Activated CD4-positive, alpha-beta memory T cell treated with anti-CD3 and anti-CD28 coated beads for 36 hours (primary cell): ENCODE measurements at regions of chr14 and their contacts with region 1.

Region 1: GRCh38 chr14:61730756-61731373 is 31.4 kb upstream of the SNAPC1 start:
- DNase-seq: no peak
- H3K4me3 Mint-ChIP-seq: no peak overlapping the region
- H3K27ac Mint-ChIP-seq: peak overlapping the region; percentile 28
- H3K4me1 Mint-ChIP-seq: peaks cover 51% of the 10 kb centered on the region
- H3K27me3 Mint-ChIP-seq: no peaks in the 10 kb centered on the region

Region 2: DNA sequence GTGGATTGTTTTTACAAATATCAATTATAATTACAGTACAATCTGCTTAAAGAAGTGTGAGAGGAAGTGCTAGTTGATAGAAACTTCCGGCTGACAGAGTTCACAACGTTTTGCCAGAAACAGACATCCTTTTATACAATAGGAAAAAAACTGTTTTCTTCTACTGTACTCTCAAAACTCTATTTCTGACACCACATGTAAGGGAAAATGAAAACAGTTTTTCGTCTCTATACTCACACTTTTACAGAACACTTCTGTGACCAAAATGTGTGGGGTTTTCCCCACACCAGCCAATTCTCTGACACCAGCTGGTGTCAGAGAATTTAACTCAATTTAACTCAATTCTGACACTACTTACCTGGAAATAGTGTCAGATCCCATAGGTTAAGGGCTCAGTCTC is 59.8 kb before region 1 on chr14:
- CTCF ChIA-PET with region 1: no interaction called
- POLR2A ChIA-PET with region 1: no interaction called
- intact Hi-C with region 1: loop called (anchors 2 kb)
- DNase-seq: peak; percentile 65
- H3K4me3 Mint-ChIP-seq: no peak overlapping the region
- H3K27ac Mint-ChIP-seq: no peak overlapping the region
- H3K4me1 Mint-ChIP-seq: peaks cover 15% of the 10 kb centered on the region
- H3K27me3 Mint-ChIP-seq: no peaks in the 10 kb centered on the region

Region 3: GRCh38 chr14:61719344-61720293 is 11.2 kb before region 1 on chr14:
- CTCF ChIA-PET with region 1: interaction called, 3 read pairs
- POLR2A ChIA-PET with region 1: interaction called, 5 read pairs
- intact Hi-C with region 1: loop called (anchors 2 kb)
- DNase-seq: no peak
- H3K4me3 Mint-ChIP-seq: peak overlapping the region; percentile 23
- H3K27ac Mint-ChIP-seq: peak overlapping the region; percentile 68
- H3K4me1 Mint-ChIP-seq: peaks cover 72% of the 10 kb centered on the region
- H3K27me3 Mint-ChIP-seq: no peaks in the 10 kb centered on the region